ENCODE measurements at regions of chr10 and their contacts with region 1.

Region 1: DNA sequence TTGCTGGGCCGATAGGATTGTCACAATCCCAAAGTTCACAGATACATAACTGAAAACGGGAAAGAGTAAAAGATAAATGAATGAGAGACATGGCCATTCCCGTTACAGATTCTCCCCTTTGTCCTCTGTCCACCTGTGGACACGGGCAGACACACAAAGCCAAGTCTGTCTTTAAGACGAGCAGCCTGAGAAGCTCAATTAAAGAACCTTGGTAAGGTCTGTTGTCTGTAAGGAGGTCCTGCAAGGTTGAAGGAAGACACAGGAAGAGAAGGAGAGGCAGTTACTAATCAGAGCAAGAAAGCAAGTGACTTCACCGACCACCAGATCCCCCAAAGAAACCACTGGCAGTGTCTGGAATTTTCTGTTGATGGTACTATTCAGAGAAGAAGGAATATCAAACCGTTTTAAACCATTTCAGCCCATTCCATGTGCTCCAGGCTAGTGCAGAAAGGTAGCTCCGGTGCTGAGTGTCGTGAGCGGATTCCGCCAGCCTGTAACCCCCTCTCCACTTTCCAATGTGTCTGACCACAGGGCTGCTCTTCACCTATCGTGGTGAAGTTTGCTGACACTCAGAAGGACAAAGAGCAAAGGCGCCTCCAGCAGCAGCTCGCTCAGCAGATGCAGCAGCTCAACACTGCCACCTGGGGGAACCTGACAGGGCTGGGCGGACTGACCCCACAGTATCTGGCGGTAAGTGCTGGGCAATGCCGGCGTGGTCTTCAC is 252.6 kb downstream of the CELF2 start:
- DNase-seq: peak; percentile 57
- ATAC-seq: peak; percentile 89
- H3K4me3 Mint-ChIP-seq: peak overlapping the region; percentile 28
- H3K27ac Mint-ChIP-seq: peak overlapping the region; percentile 77
- H3K4me1 Mint-ChIP-seq: peaks cover 64% of the 10 kb centered on the region
- H3K27me3 Mint-ChIP-seq: no peaks in the 10 kb centered on the region
- CTCF ChIP-seq: no peak

Region 2: DNA sequence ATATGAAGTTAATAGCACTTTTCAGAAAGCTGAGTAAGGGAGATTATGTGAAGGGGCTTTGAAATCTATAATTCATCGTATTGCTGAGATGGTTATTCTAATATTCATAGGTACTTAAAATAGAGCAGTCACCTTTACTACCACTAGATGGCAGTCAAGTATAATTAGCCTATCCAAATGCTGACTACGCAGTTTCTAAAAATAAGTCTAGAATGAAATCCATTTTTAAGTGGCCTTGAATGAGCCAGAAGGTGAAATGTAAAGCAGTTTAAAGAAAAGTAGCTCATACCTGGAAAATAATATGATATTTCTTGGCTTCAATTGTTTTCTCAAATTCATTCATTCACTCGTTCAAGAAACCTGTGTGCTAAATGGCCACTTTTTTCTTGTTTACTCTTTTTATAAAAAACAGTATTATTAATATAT is 1938.7 kb before region 1 on chr10:
- CTCF ChIA-PET with region 1: no interaction called
- POLR2A ChIA-PET with region 1: no interaction called
- intact Hi-C with region 1: loop called (anchors 1 kb)
- DNase-seq: no peak
- ATAC-seq: peak; percentile 54
- H3K4me3 Mint-ChIP-seq: no peak overlapping the region
- H3K27ac Mint-ChIP-seq: no peak overlapping the region
- H3K4me1 Mint-ChIP-seq: no peaks in the 10 kb centered on the region
- H3K27me3 Mint-ChIP-seq: no peaks in the 10 kb centered on the region
- CTCF ChIP-seq: peak; percentile 80

Region 3: DNA sequence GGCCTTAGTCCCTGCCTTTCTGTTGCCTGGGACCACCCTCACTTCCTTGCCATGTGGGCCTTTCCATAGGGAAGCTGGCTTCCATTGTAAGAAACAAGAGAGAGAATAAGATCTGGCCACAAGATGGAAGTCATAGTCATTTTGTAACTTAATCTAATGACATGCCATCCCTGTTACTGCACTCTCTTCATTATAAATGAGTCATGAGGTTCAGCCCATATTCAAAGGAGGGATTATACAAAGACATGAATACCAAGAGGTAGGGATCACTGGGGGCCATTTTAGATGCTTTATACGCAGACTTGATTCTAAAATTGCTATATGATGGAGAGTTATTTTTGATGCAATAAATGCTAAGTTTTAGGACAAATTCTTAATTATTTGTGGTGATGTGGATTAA is 327.9 kb before region 1 on chr10:
- CTCF ChIA-PET with region 1: no interaction called
- POLR2A ChIA-PET with region 1: no interaction called
- intact Hi-C with region 1: no loop called
- DNase-seq: no peak
- ATAC-seq: no peak
- H3K4me3 Mint-ChIP-seq: no peak overlapping the region
- H3K27ac Mint-ChIP-seq: no peak overlapping the region
- H3K4me1 Mint-ChIP-seq: no peaks in the 10 kb centered on the region
- H3K27me3 Mint-ChIP-seq: peaks cover 19% of the 10 kb centered on the region
- CTCF ChIP-seq: no peak

Region 4: DNA sequence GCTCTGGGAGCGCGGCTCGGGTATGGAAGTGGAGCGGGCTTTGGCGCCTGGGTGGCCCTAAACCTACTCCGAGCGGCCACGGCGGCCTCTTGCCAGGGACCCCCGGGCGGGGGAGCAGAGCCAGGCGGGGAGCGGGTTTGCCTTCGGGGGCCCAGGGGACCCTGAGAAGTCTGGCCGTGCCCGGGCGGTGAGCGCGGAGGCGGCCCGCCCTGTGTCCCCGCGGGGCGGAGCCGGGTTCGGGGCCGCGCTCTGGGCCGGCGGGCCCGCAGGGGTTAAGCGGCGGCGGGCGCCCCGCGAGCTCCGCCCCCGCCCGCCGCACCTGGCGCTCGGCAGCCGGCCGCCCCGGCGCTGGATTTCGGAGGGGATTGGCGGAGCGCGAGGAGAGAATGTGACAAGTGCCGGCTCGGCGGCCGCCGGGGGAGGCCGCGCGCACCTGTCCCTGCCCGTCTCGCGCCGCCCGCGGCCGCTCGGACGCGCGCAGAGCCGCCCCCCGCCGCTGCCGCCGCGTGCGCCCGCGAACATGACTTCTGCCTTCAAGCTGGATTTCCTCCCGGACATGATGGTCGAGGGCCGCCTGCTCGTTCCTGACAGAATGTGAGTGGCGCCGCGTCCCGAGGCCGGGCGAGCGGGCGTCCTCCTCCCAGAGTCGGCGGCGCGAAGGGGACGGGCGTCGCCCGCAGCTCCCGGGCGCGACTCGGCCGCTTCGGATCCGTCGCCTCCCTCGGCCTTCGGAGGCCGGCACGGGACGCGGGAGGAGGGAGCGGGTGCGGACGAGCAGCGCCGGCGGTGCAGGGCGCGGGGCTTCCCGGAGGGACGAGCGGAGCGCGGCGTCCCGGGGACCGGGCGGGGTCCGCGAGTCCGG is 252.5 kb before region 1 on chr10 and contains the start of gene CELF2:
- CTCF ChIA-PET with region 1: no interaction called
- POLR2A ChIA-PET with region 1: no interaction called
- intact Hi-C with region 1: loop called (anchors 5 kb)
- DNase-seq: peak; percentile 53
- ATAC-seq: peak; percentile 78
- H3K4me3 Mint-ChIP-seq: peak within 1 kb of the TSS; percentile 79
- H3K27ac Mint-ChIP-seq: no peak within 1 kb of the TSS
- H3K4me1 Mint-ChIP-seq: peaks cover 12% of the 10 kb centered on the region
- H3K27me3 Mint-ChIP-seq: peaks cover 67% of the 10 kb centered on the region
- CTCF ChIP-seq: no peak
- total RNA-seq, gene CELF2: 78.9 and 89.2 TPM in 2 replicates

Region 5: GRCh38 chr10:11145495-11145855 is 124.8 kb before region 1 on chr10:
- CTCF ChIA-PET with region 1: interaction called, 14 read pairs
- POLR2A ChIA-PET with region 1: no interaction called
- intact Hi-C with region 1: loop called (anchors 1 kb)
- DNase-seq: no peak
- ATAC-seq: peak; percentile 79
- H3K4me3 Mint-ChIP-seq: peak overlapping the region; percentile 80
- H3K27ac Mint-ChIP-seq: peak overlapping the region; percentile 97
- H3K4me1 Mint-ChIP-seq: peaks cover 92% of the 10 kb centered on the region
- H3K27me3 Mint-ChIP-seq: no peaks in the 10 kb centered on the region
- CTCF ChIP-seq: no peak

Region 6: DNA sequence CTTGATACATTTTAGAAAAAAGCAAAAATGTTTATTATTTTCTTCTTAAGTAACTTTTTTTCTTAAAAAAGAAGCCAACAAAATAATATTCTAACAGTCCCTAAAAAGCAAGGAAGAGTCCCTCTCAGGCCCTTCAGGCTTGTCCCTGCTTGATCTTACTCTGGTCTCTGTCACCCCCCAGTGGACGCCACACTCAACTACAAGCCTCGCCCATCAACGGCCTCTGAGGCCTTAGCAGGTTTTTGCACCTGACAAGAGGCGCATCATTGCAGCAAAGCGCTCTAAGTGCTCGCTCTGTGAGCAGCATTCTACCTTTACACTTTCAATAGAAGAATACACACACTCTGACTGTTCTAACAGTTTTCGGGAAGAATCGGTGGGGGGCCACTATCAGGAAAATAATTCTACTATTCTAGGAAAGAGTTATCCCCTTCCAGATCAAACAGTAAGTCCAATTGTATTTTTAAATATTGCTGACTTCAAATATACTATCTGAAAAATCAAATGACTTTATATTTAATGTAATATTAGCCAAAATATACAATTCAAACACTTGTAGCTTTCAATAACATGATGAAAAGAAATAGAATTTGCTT is 202.0 kb after region 1 on chr10:
- CTCF ChIA-PET with region 1: no interaction called
- POLR2A ChIA-PET with region 1: no interaction called
- intact Hi-C with region 1: loop called (anchors 2 kb)
- DNase-seq: peak; percentile 53
- ATAC-seq: peak; percentile 95
- H3K4me3 Mint-ChIP-seq: no peak overlapping the region
- H3K27ac Mint-ChIP-seq: peak overlapping the region; percentile 61
- H3K4me1 Mint-ChIP-seq: peaks cover 15% of the 10 kb centered on the region
- H3K27me3 Mint-ChIP-seq: no peaks in the 10 kb centered on the region
- CTCF ChIP-seq: no peak